Gastrocnemius medialis (tissue), 4 donors: ENCODE measurements at regions of chr1 and their contacts with region 1.

Region 1: DNA sequence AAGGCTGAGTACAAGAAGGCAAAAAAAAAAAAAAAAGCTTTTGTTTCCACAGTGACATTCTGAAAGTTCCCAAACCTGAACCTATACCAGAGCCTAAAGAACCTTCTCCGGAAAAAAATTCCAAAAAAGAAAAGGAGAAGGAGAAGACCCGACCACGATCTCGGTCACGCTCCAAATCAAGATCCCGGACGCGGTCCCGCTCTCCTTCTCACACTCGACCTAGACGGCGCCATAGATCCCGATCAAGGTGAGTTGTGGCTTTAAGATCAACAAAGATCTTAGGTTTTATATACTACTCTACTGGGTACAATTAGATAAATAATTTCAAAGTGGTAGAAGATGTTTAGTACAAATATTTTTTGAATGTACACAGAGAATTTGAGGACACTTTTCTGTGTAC is 9.3 kb downstream of the SRRM1 start:
- DNase-seq: no peak
- ATAC-seq: no peak
- H3K4me3 ChIP-seq: no peak overlapping the region
- H3K27ac ChIP-seq: no peak overlapping the region
- H3K4me1 ChIP-seq: no peaks in the 10 kb centered on the region
- H3K27me3 ChIP-seq: no peaks in the 10 kb centered on the region
- CTCF ChIP-seq: no peak
- POLR2A ChIP-seq: no peak

Region 2: GRCh38 chr1:24666794-24667193 is 14.4 kb after region 1 on chr1:
- in situ Hi-C with region 1: no loop called
- intact Hi-C with region 1: loop called (anchors 2 kb)
- DNase-seq: no peak
- ATAC-seq: no peak
- H3K4me3 ChIP-seq: no peak overlapping the region
- H3K27ac ChIP-seq: no peak overlapping the region
- H3K4me1 ChIP-seq: no peaks in the 10 kb centered on the region
- H3K27me3 ChIP-seq: no peaks in the 10 kb centered on the region
- CTCF ChIP-seq: no peak
- POLR2A ChIP-seq: no peak

Region 3: DNA sequence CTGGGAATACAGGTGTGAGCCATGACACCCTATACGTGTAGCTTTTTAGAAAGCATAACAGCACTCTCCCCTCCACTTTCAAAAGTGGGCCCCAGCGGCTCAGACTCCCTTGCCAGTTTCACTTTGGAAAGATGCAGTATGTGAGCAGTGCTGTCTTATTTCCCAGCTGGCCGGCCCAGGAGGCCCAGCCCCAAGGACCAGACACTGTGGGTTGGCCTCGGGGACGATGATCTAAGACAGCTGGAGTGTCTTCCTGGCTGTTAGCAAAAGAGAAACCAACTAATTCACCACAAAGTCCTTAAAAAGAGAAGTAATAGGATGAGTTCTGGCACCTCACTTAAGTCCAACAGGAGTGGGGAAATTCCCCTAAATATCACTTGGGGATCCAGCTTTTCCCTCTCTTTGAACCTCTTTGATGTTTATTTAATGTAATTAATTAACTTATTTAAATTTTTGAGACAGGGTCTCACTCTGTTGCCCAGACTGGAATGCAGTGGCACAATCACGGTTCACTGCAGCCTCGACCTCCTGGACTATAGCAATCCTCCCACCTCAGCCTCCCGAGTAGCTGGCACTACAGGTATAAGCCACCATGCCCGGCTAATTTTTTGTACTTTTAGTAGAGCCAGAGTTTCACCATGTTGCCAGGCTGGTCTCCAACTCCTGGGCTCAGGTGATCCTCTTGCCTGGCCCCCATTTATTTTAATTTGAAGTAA is 75.3 kb after region 1 on chr1:
- in situ Hi-C with region 1: no loop called
- intact Hi-C with region 1: no loop called
- DNase-seq: peak in 1 of 2 donors; percentile 32
- ATAC-seq: peak; percentile 16 to 49
- H3K4me3 ChIP-seq: no peak overlapping the region
- H3K27ac ChIP-seq: peak overlapping the region; percentile 9 to 64 (median 40)
- H3K4me1 ChIP-seq: peaks cover 13 to 15% of the 10 kb centered on the region in 2 donors
- H3K27me3 ChIP-seq: no peaks in the 10 kb centered on the region
- CTCF ChIP-seq: no peak
- POLR2A ChIP-seq: no peak